Activated CD4-positive, alpha-beta T cell treated with anti-CD3 and anti-CD28 coated beads for 36 hours (primary cell): ENCODE measurements at regions of chr1 and their contacts with region 1.

Region 1: GRCh38 chr1:86419277-86419903 is 4.6 kb upstream of the CLCA2 start:
- DNase-seq: peak; percentile 59
- ATAC-seq: peak; percentile 94
- H3K4me3 Mint-ChIP-seq: no peak overlapping the region
- H3K27ac Mint-ChIP-seq: no peak overlapping the region
- H3K4me1 Mint-ChIP-seq: peaks cover 2% of the 10 kb centered on the region
- H3K27me3 Mint-ChIP-seq: no peaks in the 10 kb centered on the region

Region 2: GRCh38 chr1:86296305-86297205 is 122.8 kb before region 1 on chr1:
- CTCF ChIA-PET with region 1: no interaction called
- POLR2A ChIA-PET with region 1: no interaction called
- intact Hi-C with region 1: no loop called
- DNase-seq: no peak
- ATAC-seq: no peak
- H3K4me3 Mint-ChIP-seq: no peak overlapping the region
- H3K27ac Mint-ChIP-seq: no peak overlapping the region
- H3K4me1 Mint-ChIP-seq: no peaks in the 10 kb centered on the region
- H3K27me3 Mint-ChIP-seq: no peaks in the 10 kb centered on the region

Region 3: GRCh38 chr1:86507935-86508582 is 88.7 kb after region 1 on chr1:
- CTCF ChIA-PET with region 1: interaction called, 11 read pairs
- POLR2A ChIA-PET with region 1: no interaction called
- intact Hi-C with region 1: loop called in 1 of 2 experiments (anchors 2 kb)
- DNase-seq: peak; percentile 20
- ATAC-seq: no peak
- H3K4me3 Mint-ChIP-seq: no peak overlapping the region
- H3K27ac Mint-ChIP-seq: no peak overlapping the region
- H3K4me1 Mint-ChIP-seq: no peaks in the 10 kb centered on the region
- H3K27me3 Mint-ChIP-seq: peaks cover 7% of the 10 kb centered on the region